B cell (primary cell): ENCODE measurements at regions of chr5 and their contacts with region 1.

Region 1: GRCh38 chr5:36728697-36729543 is 122.5 kb downstream of the SLC1A3 start:
- DNase-seq: peak; percentile 74
- ATAC-seq: no peak
- H3K4me3 ChIP-seq: no peak overlapping the region
- H3K4me3 Mint-ChIP-seq: no peak overlapping the region
- H3K27ac ChIP-seq: no peak overlapping the region
- H3K27ac Mint-ChIP-seq: no peak overlapping the region
- H3K4me1 ChIP-seq: peaks cover 16 to 17% of the 10 kb centered on the region in 2 donors
- H3K4me1 Mint-ChIP-seq: peaks cover 18% of the 10 kb centered on the region
- H3K27me3 ChIP-seq: no peaks in the 10 kb centered on the region
- H3K27me3 Mint-ChIP-seq: no peaks in the 10 kb centered on the region
- CTCF ChIP-seq: peak; percentile 85

Region 2: GRCh38 chr5:36690041-36690961 is 38.6 kb before region 1 on chr5:
- CTCF ChIA-PET with region 1: interaction called, 59 read pairs
- POLR2A ChIA-PET with region 1: no interaction called
- intact Hi-C with region 1: loop called (anchors 2 kb)
- DNase-seq: peak; percentile 84
- ATAC-seq: peak; percentile 83
- H3K4me3 ChIP-seq: peak overlapping the region; percentile 45 to 83 (median 70)
- H3K4me3 Mint-ChIP-seq: peak overlapping the region; percentile 94
- H3K27ac ChIP-seq: peak overlapping the region in 1 of 2 donors; percentile 55
- H3K27ac Mint-ChIP-seq: peak overlapping the region; percentile 82
- H3K4me1 ChIP-seq: peaks cover 25 to 33% of the 10 kb centered on the region in 2 donors
- H3K4me1 Mint-ChIP-seq: peaks cover 41% of the 10 kb centered on the region
- H3K27me3 ChIP-seq: no peaks in the 10 kb centered on the region
- H3K27me3 Mint-ChIP-seq: peaks cover 4% of the 10 kb centered on the region
- CTCF ChIP-seq: peak; percentile 92

Region 3: DNA sequence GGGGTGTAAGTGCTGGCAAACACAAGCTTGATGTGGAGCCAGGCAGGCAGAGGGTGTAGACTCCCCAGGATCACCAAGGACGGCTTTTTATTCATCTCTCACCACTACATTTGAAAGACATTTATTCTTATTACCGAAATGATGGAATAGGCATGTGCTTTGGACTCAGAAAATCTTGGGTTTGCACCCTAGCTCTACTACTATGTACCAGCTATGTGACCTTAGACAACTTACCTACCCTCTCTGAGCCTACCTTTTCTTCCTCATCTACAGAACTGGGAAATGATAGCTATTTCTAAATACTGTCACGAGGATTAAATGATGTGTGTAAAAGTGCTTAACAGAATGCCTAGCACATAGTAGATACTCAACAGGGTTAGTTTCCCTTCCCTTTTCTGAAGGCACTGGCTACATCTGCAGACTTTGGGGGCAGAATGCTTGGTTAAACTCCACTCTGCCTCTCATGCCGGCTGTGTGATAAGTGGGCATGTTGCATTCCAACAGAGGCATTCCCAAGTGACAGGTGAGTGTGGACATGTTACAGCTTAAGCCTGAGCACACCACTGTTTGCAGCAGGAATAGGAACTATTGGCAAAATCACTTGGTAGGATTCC is 27.7 kb before region 1 on chr5:
- CTCF ChIA-PET with region 1: interaction called, 27 read pairs
- POLR2A ChIA-PET with region 1: no interaction called
- intact Hi-C with region 1: no loop called
- DNase-seq: peak; percentile 81
- ATAC-seq: peak; percentile 99
- H3K4me3 ChIP-seq: peak overlapping the region in 1 of 5 experiments; percentile 12
- H3K4me3 Mint-ChIP-seq: peak overlapping the region; percentile 69
- H3K27ac ChIP-seq: peak overlapping the region; percentile 27 to 37
- H3K27ac Mint-ChIP-seq: peak overlapping the region; percentile 86
- H3K4me1 ChIP-seq: peaks cover 23 to 25% of the 10 kb centered on the region in 2 donors
- H3K4me1 Mint-ChIP-seq: peaks cover 28% of the 10 kb centered on the region
- H3K27me3 ChIP-seq: no peaks in the 10 kb centered on the region
- H3K27me3 Mint-ChIP-seq: no peaks in the 10 kb centered on the region
- CTCF ChIP-seq: no peak

Region 4: GRCh38 chr5:36744773-36745589 is 16.1 kb after region 1 on chr5:
- CTCF ChIA-PET with region 1: interaction called, 32 read pairs
- POLR2A ChIA-PET with region 1: interaction called, 7 read pairs
- intact Hi-C with region 1: loop called (anchors 2 kb)
- DNase-seq: peak; percentile 70
- ATAC-seq: peak; percentile 70
- H3K4me3 ChIP-seq: peak overlapping the region; percentile 47 to 88 (median 63)
- H3K4me3 Mint-ChIP-seq: peak overlapping the region; percentile 95
- H3K27ac ChIP-seq: peak overlapping the region in 1 of 2 donors; percentile 44
- H3K27ac Mint-ChIP-seq: peak overlapping the region; percentile 94
- H3K4me1 ChIP-seq: peaks cover 20% of the 10 kb centered on the region in 2 donors
- H3K4me1 Mint-ChIP-seq: peaks cover 20% of the 10 kb centered on the region
- H3K27me3 ChIP-seq: peaks cover 0 to 13% (median 3%) of the 10 kb centered on the region in 4 experiments
- H3K27me3 Mint-ChIP-seq: peaks cover 12% of the 10 kb centered on the region
- CTCF ChIP-seq: peak; percentile 36

Region 5: DNA sequence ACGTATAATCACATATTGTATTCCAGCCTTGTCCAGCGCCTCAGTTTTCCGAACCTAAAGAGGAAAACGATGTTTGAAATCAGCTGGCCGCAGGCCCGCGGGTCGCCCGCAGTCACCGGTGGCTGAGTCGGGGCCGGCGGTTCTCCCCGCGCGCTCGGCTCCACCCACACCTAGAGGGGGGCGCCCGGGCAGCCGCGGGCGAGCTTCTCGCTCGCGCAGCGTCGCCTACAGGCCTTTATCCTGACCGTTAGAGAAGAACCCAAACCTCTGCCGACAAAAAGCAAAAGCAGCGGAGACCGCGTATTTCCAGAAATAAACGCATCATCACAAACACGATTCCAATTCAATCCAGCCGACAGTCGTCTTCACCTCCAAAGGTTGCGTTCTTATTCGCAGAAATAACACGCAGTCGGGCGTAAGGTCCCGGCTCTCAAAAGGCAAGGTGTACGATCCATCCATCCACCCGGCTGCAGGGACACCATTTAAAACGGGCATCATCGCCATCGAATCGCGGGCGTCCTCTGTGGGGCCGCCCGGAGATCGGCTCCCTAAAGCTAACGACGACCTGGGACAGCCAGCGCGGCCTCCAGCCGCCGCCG is 147.0 kb after region 1 on chr5:
- CTCF ChIA-PET with region 1: interaction called, 17 read pairs
- POLR2A ChIA-PET with region 1: interaction called, 15 read pairs
- intact Hi-C with region 1: loop called (anchors 1 kb)
- DNase-seq: peak; percentile 89
- ATAC-seq: peak; percentile 70
- H3K4me3 ChIP-seq: peak overlapping the region; percentile 85 to 99 (median 94)
- H3K4me3 Mint-ChIP-seq: peak overlapping the region; percentile 91
- H3K27ac ChIP-seq: peak overlapping the region; percentile 92 to 98
- H3K27ac Mint-ChIP-seq: peak overlapping the region; percentile 95
- H3K4me1 ChIP-seq: peaks cover 19 to 42% of the 10 kb centered on the region in 2 donors
- H3K4me1 Mint-ChIP-seq: peaks cover 40% of the 10 kb centered on the region
- H3K27me3 ChIP-seq: no peaks in the 10 kb centered on the region
- H3K27me3 Mint-ChIP-seq: no peaks in the 10 kb centered on the region
- CTCF ChIP-seq: peak; percentile 71

Region 6: DNA sequence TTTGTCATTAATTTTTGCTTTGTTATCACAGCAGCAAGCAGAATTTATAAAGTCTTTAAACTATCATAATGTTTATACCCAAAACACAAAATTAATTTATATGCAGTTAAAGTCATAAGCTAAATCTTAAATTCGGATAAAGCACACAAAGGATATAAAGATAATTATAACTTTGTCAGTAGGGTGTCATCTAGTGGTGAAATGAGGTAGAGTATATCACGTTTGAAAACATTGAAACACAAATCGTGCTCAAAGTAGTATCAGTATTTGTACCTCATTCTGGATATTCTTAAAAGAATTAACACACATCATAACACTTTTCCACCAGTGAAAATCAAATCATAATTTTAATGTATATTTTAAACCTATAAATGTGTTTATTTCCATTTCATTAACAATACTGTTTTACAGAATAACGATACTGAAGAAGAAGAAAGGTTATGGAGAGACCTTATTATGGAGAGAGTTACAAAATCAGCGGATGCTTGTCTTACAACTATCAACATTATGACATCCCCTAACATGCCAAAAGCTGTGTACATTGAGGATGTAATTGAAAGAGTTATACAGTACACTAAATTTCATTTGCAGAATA is 277.1 kb after region 1 on chr5:
- CTCF ChIA-PET with region 1: interaction called, 67 read pairs
- POLR2A ChIA-PET with region 1: no interaction called
- intact Hi-C with region 1: loop called (anchors 2 kb)
- DNase-seq: peak; percentile 23
- ATAC-seq: no peak
- H3K4me3 ChIP-seq: no peak overlapping the region
- H3K4me3 Mint-ChIP-seq: no peak overlapping the region
- H3K27ac ChIP-seq: no peak overlapping the region
- H3K27ac Mint-ChIP-seq: no peak overlapping the region
- H3K4me1 ChIP-seq: no peaks in the 10 kb centered on the region
- H3K4me1 Mint-ChIP-seq: no peaks in the 10 kb centered on the region
- H3K27me3 ChIP-seq: no peaks in the 10 kb centered on the region
- H3K27me3 Mint-ChIP-seq: no peaks in the 10 kb centered on the region
- CTCF ChIP-seq: peak; percentile 66